Naive thymus-derived CD8-positive, alpha-beta T cell (primary cell): ENCODE measurements at regions of chr16 and their contacts with region 1.

Region 1: DNA sequence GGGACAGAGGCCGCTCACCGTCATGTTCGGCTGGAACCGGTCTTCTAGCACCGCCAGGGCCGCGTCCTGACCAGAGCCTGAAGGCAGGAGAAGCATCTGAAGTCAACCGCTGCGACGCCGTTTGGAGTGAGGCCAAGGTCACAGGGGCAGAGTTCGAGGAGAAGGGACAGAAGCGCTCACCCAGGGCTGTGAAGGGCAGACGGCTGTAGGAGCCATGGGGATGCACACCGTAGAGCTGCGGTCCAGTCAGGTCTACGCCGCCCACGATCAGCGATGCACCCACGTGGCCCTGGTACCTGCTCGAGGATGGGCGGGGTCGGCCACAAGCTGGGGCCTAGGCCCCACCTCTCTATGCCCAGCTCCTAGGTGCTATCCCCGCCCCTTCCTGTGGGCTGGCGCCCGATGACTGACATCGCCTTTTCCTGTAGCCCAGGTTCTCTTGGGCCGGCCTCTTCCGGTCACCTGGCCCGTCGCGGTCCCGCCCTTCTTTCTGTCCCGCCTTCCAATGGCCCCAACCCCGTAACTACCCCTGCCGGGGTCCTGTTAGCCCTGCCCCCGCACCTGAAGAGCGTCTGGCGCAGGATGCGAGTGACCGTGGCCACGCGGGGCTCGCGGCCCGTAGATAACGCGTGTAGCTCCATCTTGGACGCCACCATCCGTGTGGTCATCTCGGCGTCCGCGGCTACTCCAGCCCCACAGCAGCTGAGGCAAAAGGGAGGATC is 1.1 kb downstream of the PSMB10 start:
- DNase-seq: peak; percentile 81 to 97 (median 93)
- ATAC-seq: peak; percentile 83 to 91
- H3K4me3 Mint-ChIP-seq: peak overlapping the region; percentile 99 to 100 (median 100)
- H3K27ac Mint-ChIP-seq: peak overlapping the region; percentile 93 to 99 (median 98)
- H3K4me1 Mint-ChIP-seq: peaks cover 27 to 47% (median 43%) of the 10 kb centered on the region in 4 donors
- H3K27me3 Mint-ChIP-seq: no peaks in the 10 kb centered on the region

Region 2: GRCh38 chr16:67872786-67873537 is 62.6 kb before region 1 on chr16 and contains the start of gene EDC4:
- POLR2A ChIA-PET with region 1: interaction called, 15 read pairs
- DNase-seq: peak; percentile 74 to 91 (median 86)
- ATAC-seq: peak; percentile 92 to 96
- H3K4me3 Mint-ChIP-seq: peak within 1 kb of the TSS; percentile 87 to 95 (median 90)
- H3K27ac Mint-ChIP-seq: peak within 1 kb of the TSS; percentile 70 to 95 (median 94)
- H3K4me1 Mint-ChIP-seq: peaks cover 20 to 39% (median 33%) of the 10 kb centered on the region in 4 donors
- H3K27me3 Mint-ChIP-seq: no peaks in the 10 kb centered on the region
- polyA plus RNA-seq, gene EDC4: 22.7 to 44.0 (median 40.8) TPM

Region 3: GRCh38 chr16:67968400-67969253 is 33.1 kb after region 1 on chr16 and contains the start of gene SLC12A4:
- POLR2A ChIA-PET with region 1: interaction called, 34 read pairs
- DNase-seq: peak; percentile 78 to 92 (median 88)
- ATAC-seq: peak; percentile 87 to 90
- H3K4me3 Mint-ChIP-seq: peak within 1 kb of the TSS; percentile 87 to 99 (median 97)
- H3K27ac Mint-ChIP-seq: peak within 1 kb of the TSS; percentile 80 to 97 (median 92)
- H3K4me1 Mint-ChIP-seq: peaks cover 13 to 38% (median 32%) of the 10 kb centered on the region in 4 donors
- H3K27me3 Mint-ChIP-seq: no peaks in the 10 kb centered on the region
- polyA plus RNA-seq, gene SLC12A4: 3.0 to 5.6 (median 5.2) TPM

Region 4: DNA sequence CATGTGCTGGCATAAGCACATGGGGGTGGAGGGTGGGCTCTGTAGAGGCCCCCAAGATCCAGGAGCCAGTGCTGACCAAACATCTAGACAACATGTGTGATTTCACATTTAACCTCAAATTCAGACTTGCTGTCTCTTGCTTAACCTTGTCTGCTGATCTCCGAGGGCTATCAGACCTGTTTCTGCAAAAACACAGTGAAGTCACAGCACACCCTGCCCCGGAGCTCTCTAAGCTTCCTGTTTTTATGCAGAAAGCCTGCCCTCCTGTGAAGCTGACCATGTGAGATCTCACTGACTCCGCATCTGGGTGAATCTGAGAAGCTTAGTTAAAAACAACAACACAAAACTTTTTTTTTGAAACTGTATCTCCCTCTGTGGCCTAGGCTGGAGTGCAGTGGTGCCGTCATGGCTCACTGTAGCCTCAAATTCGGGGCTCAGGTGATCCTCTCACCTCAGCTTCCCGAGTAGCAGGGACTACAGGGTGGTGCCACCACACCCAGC is 70.3 kb after region 1 on chr16:
- POLR2A ChIA-PET with region 1: interaction called, 27 read pairs
- DNase-seq: peak in 9 of 10 donors; percentile 30 to 85 (median 62)
- ATAC-seq: peak; percentile 97 to 98
- H3K4me3 Mint-ChIP-seq: peak overlapping the region; percentile 29 to 75 (median 68)
- H3K27ac Mint-ChIP-seq: peak overlapping the region; percentile 81 to 99 (median 97)
- H3K4me1 Mint-ChIP-seq: peaks cover 13 to 57% (median 41%) of the 10 kb centered on the region in 4 donors
- H3K27me3 Mint-ChIP-seq: no peaks in the 10 kb centered on the region

Region 5: GRCh38 chr16:68079626-68080344 is 144.2 kb after region 1 on chr16:
- POLR2A ChIA-PET with region 1: interaction called, 34 read pairs
- DNase-seq: peak; percentile 32 to 85 (median 68)
- ATAC-seq: peak; percentile 46 to 61
- H3K4me3 Mint-ChIP-seq: peak overlapping the region; percentile 66 to 86 (median 75)
- H3K27ac Mint-ChIP-seq: peak overlapping the region; percentile 86 to 97 (median 95)
- H3K4me1 Mint-ChIP-seq: peaks cover 57 to 92% (median 90%) of the 10 kb centered on the region in 4 donors
- H3K27me3 Mint-ChIP-seq: no peaks in the 10 kb centered on the region